Activated CD8-positive, alpha-beta T cell treated with anti-CD3 and anti-CD28 coated beads for 36 hours (primary cell): ENCODE measurements at regions of chrX and their contacts with region 1.

Region 1: DNA sequence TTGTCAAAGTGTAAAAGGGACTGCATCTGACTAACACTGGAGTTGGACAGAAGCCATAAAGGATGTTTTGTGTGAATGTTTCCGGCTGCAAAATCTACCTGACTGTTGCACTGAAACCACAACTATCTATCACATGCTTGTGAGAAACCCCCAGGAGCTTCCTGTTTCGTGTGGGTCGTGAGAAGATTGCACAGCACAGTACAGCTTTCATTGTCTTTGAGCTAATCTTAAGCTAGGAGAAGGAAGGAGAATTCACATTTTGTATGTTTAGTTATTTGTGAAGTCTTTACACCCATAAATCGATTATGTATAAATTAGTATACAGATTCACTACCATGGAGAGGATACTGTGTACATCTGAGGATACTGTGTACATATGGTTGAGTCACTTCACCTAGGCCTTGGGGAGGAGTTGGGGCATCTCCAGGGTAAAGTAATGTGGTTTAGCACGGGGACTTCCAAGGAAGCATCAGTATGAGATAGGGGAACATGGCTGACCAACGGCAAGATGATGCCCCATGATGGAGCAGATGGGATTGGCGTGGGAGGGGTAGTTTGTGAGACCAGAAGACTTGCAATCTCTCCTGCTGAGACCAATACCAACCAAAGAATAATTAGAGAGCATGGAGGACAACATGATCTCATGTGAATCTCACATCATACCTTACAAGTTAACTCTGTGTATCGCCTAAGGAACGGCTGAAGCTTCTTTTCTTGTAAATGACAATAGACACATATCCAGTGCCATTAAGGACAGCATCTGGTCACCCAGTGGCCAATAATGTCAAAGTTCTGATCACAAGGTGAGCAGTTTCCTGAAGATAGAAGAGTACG is 43.1 kb upstream of the FAM9C start:
- DNase-seq: peak; percentile 77
- ATAC-seq: peak; percentile 57
- H3K4me3 Mint-ChIP-seq: peak overlapping the region; percentile 80
- H3K27ac Mint-ChIP-seq: peak overlapping the region; percentile 96
- H3K4me1 Mint-ChIP-seq: peaks cover 76% of the 10 kb centered on the region
- H3K27me3 Mint-ChIP-seq: no peaks in the 10 kb centered on the region
- CTCF ChIP-seq: no peak

Region 2: GRCh38 chrX:12701628-12702027 is 385.9 kb before region 1 on chrX:
- CTCF ChIA-PET with region 1: no interaction called
- POLR2A ChIA-PET with region 1: no interaction called
- intact Hi-C with region 1: no loop called
- DNase-seq: peak; percentile 58
- ATAC-seq: peak; percentile 42
- H3K4me3 Mint-ChIP-seq: no peak overlapping the region
- H3K27ac Mint-ChIP-seq: no peak overlapping the region
- H3K4me1 Mint-ChIP-seq: no peaks in the 10 kb centered on the region
- H3K27me3 Mint-ChIP-seq: peaks cover 3% of the 10 kb centered on the region
- CTCF ChIP-seq: peak; percentile 41

Region 3: DNA sequence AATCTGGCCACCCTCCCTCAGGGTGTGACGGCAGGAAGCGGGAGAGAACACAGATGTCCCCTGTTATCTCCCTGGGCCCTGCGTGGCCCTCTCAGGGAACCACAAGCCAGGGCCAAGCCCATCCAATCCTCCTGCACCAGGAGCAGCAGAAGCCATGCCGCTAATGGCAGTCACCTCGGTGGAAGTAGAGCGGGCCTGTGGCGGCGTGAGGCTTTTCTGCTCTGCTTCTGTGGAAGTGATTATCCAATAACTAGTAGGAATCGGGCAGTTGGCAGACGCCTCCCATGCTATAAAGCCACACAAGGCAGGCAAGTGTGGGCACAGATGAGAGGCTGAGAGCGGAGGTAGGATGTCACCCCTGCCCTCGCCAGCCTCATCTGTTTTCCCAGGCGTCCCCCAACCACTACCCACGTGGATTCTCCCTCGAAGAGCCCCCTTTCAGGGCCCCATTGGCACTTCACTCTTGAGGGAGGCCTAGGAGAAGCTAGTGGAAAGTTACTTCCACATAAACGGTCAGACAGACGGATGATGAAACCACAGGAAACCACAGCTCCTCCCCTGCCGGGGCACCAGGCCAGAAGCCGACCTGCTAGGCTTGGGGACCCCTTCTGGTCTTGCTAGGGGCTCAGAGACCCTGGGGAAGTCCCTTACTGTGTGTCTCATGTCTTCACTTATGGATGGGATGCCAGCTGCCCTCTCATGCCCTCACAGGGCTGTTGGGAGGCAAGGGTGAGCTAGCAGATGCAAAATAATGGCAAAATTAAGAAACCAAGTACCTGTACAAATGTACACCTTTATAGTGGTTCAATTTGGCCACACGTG is 131.4 kb before region 1 on chrX:
- CTCF ChIA-PET with region 1: interaction called, 25 read pairs
- POLR2A ChIA-PET with region 1: interaction called, 31 read pairs
- intact Hi-C with region 1: loop called (anchors 2 kb)
- DNase-seq: peak; percentile 83
- ATAC-seq: peak; percentile 45
- H3K4me3 Mint-ChIP-seq: peak overlapping the region; percentile 88
- H3K27ac Mint-ChIP-seq: peak overlapping the region; percentile 98
- H3K4me1 Mint-ChIP-seq: peaks cover 53% of the 10 kb centered on the region
- H3K27me3 Mint-ChIP-seq: no peaks in the 10 kb centered on the region
- CTCF ChIP-seq: no peak

Region 4: DNA sequence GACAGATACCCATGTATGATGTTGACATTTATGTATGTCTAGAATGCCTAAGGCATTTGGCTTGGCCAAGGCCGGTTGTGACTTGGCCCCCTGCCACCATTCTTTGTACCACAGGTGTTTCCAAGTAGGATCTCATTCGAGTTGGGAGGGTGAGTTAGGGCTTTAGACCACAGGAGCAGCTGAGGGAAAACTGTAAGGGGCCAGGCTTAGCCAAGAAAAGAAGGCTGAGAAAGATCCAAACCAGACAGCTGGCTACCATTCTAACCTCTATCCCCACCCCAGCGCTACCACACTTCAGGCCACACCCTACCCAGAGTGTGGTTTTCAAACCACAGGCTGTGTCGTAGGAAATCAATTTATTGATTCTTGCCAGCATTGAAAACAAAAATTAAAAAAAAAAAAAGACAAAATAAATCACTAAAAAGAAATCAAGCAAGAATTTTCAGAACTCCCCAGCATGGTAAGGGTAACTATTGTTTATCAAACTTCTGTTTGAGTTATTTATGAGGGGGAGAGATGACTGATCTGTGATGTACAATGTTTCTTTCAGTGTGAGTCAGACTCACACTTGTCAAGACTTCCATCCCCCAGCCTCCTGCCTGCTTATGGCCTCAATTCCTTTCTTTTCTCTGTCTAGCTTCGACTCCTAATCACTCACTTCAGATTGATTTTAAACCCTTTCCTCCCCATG is 102.8 kb before region 1 on chrX:
- CTCF ChIA-PET with region 1: interaction called, 15 read pairs
- POLR2A ChIA-PET with region 1: interaction called, 15 read pairs
- intact Hi-C with region 1: loop called (anchors 2 kb)
- DNase-seq: peak; percentile 66
- ATAC-seq: peak; percentile 81
- H3K4me3 Mint-ChIP-seq: peak overlapping the region; percentile 50
- H3K27ac Mint-ChIP-seq: peak overlapping the region; percentile 97
- H3K4me1 Mint-ChIP-seq: peaks cover 74% of the 10 kb centered on the region
- H3K27me3 Mint-ChIP-seq: no peaks in the 10 kb centered on the region
- CTCF ChIP-seq: no peak

Region 5: GRCh38 chrX:13026877-13027652 is 60.5 kb before region 1 on chrX:
- CTCF ChIA-PET with region 1: interaction called, 3 read pairs
- POLR2A ChIA-PET with region 1: no interaction called
- intact Hi-C with region 1: loop called (anchors 2 kb)
- DNase-seq: peak; percentile 28
- ATAC-seq: peak; percentile 58
- H3K4me3 Mint-ChIP-seq: no peak overlapping the region
- H3K27ac Mint-ChIP-seq: peak overlapping the region; percentile 82
- H3K4me1 Mint-ChIP-seq: peaks cover 82% of the 10 kb centered on the region
- H3K27me3 Mint-ChIP-seq: no peaks in the 10 kb centered on the region
- CTCF ChIP-seq: no peak

Region 6: GRCh38 chrX:13074297-13075262 is 13.0 kb before region 1 on chrX:
- CTCF ChIA-PET with region 1: interaction called, 5 read pairs
- POLR2A ChIA-PET with region 1: interaction called, 30 read pairs
- intact Hi-C with region 1: no loop called
- DNase-seq: peak; percentile 20
- ATAC-seq: peak; percentile 61
- H3K4me3 Mint-ChIP-seq: peak overlapping the region; percentile 36
- H3K27ac Mint-ChIP-seq: peak overlapping the region; percentile 86
- H3K4me1 Mint-ChIP-seq: peaks cover 45% of the 10 kb centered on the region
- H3K27me3 Mint-ChIP-seq: no peaks in the 10 kb centered on the region
- CTCF ChIP-seq: no peak

Region 7: GRCh38 chrX:13103914-13104274 is 16.4 kb after region 1 on chrX:
- CTCF ChIA-PET with region 1: no interaction called
- POLR2A ChIA-PET with region 1: no interaction called
- intact Hi-C with region 1: no loop called
- DNase-seq: no peak
- ATAC-seq: no peak
- H3K4me3 Mint-ChIP-seq: no peak overlapping the region
- H3K27ac Mint-ChIP-seq: no peak overlapping the region
- H3K4me1 Mint-ChIP-seq: peaks cover 37% of the 10 kb centered on the region
- H3K27me3 Mint-ChIP-seq: no peaks in the 10 kb centered on the region
- CTCF ChIP-seq: no peak

Region 8: DNA sequence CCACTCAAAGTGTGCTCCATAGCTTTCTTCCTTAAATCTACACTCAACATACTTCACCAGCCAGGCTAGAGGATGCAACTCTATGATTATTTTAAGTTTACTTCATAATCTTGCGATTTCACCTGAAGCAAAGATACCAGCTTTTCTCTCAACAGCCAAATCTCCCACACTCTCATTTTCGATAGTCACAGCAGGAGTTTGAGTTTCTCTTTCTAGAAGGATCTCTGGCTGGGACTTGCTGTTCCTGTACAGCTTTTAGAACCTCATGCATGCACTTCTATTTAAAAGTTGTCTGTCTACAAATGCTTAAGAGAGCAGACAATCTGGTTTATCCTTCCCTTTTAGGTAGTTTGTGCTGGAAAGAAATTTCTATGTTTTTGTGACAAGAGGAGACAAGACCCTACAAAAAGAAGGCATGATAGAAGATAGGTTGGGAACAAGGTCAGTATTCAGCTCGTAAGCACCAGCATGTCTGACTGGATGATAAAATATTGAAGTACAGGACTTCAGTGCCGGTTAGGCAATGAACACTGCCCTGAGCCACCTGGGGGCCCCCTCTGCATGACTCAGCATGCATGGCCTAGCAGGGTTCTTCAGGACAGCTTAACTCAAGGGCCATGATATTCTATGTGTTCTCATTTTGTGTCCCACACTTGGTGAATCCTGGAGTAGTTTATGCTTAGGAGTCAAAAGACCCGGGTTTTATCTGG is 166.7 kb after region 1 on chrX:
- CTCF ChIA-PET with region 1: no interaction called
- POLR2A ChIA-PET with region 1: no interaction called
- intact Hi-C with region 1: loop called (anchors 10 kb)
- DNase-seq: peak; percentile 32
- ATAC-seq: peak; percentile 69
- H3K4me3 Mint-ChIP-seq: no peak overlapping the region
- H3K27ac Mint-ChIP-seq: peak overlapping the region; percentile 46
- H3K4me1 Mint-ChIP-seq: peaks cover 43% of the 10 kb centered on the region
- H3K27me3 Mint-ChIP-seq: no peaks in the 10 kb centered on the region
- CTCF ChIP-seq: no peak

Region 9: GRCh38 chrX:13283950-13284914 is 196.7 kb after region 1 on chrX:
- CTCF ChIA-PET with region 1: no interaction called
- POLR2A ChIA-PET with region 1: no interaction called
- intact Hi-C with region 1: no loop called
- DNase-seq: no peak
- ATAC-seq: no peak
- H3K4me3 Mint-ChIP-seq: no peak overlapping the region
- H3K27ac Mint-ChIP-seq: no peak overlapping the region
- H3K4me1 Mint-ChIP-seq: peaks cover 3% of the 10 kb centered on the region
- H3K27me3 Mint-ChIP-seq: no peaks in the 10 kb centered on the region
- CTCF ChIP-seq: no peak